Posterior cingulate gyrus (tissue), 11 donors: ENCODE measurements at regions of chr7 and their contacts with region 1.

Region 1: GRCh38 chr7:92621026-92621540 is 30.9 kb upstream of the FAM133B start:
- DNase-seq: peak in 8 of 10 donors; percentile 34 to 92 (median 62)

Region 2: DNA sequence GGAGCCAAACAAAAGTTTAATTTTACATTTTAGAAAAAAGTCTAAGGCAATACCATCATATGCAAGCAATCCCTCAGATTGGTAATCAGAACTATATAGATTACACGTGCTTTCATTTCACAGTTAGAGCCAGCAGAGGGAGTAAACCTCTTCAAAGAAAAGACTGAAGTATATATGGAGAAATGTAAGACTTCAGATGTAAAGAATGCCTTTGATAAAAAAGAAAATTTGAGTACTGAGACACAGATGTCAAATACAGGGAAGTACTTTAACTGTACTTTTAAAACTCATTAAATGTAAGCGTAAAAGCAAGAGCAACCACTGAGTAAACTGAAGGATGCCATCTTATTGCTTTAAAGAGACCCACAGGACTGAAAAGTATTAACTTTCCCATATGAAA is 70.5 kb after region 1 on chr7:
- intact Hi-C with region 1: loop called (anchors 10 kb)
- DNase-seq: no peak

Region 3: DNA sequence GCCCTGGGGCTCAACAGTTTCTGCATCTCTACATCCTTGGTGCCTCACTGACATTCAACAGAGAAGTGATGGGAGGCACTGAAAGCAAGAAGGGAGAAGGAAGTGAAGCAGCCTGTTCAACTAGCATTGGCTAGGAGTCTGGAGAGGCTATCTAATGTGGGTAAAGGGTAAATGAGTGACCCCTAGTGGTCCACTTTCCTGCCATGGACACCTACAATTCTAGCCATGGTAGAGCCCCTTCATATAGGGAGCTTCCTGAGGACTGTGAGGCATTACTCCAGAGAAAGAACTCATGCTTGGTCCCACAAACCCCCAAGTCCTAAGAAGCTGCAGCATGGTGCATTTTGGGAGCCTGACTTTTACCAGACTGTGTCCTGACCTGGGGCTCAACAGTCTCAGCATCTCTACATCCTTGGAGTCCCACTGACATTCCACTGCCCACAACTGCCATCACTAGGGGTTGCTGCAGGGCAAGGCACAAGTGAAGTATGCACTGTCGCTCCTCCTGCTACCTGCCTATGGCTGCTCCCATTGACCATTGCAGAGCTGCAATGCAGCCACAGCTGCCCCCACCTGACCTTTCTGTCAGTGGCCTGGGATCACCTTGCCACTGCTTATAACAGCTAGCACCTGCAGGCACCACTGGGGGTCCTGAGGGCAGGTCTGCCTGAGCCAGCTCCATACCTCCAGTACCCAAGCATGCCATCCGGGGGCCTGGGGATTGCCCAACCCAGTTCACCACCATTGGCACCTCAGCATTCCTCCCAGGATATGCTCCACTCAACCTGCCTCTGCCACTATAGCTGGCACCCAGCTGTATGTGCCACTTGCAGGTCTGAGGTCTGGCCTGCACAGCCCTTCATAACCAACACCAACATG is 259.4 kb after region 1 on chr7:
- intact Hi-C with region 1: loop called (anchors 2 kb)
- DNase-seq: peak in 2 of 10 donors; percentile 14 to 44

Region 4: GRCh38 chr7:93055543-93056107 is 434.5 kb after region 1 on chr7:
- intact Hi-C with region 1: loop called (anchors 2 kb)
- DNase-seq: no peak